Naive thymus-derived CD4-positive, alpha-beta T cell (primary cell): ENCODE measurements at regions of chr5 and their contacts with region 1.

Region 1: GRCh38 chr5:172714491-172715421 is 56.2 kb downstream of the DUSP1 start:
- DNase-seq: peak; percentile 38 to 65 (median 57)
- ATAC-seq: peak; percentile 85
- H3K4me3 ChIP-seq: no peak overlapping the region
- H3K4me3 Mint-ChIP-seq: no peak overlapping the region
- H3K27ac ChIP-seq: no peak overlapping the region
- H3K27ac Mint-ChIP-seq: peak overlapping the region in 4 of 9 donors; percentile 17 to 72 (median 38)
- H3K4me1 ChIP-seq: peaks cover 0 to 7% of the 10 kb centered on the region in 2 donors
- H3K4me1 Mint-ChIP-seq: peaks cover 0 to 8% (median 5%) of the 10 kb centered on the region in 7 donors
- H3K27me3 ChIP-seq: no peaks in the 10 kb centered on the region
- H3K27me3 Mint-ChIP-seq: peaks cover 0 to 18% (median 11%) of the 10 kb centered on the region in 5 donors

Region 2: GRCh38 chr5:172764849-172765765 is 50.4 kb after region 1 on chr5:
- CTCF ChIA-PET with region 1: interaction called, 33 read pairs
- POLR2A ChIA-PET with region 1: interaction called, 27 read pairs
- intact Hi-C with region 1: loop called (anchors 1 kb)
- DNase-seq: peak; percentile 86 to 100 (median 99)
- ATAC-seq: peak; percentile 73
- H3K4me3 ChIP-seq: peak overlapping the region; percentile 64
- H3K4me3 Mint-ChIP-seq: peak overlapping the region; percentile 80 to 93 (median 84)
- H3K27ac ChIP-seq: peak overlapping the region; percentile 93
- H3K27ac Mint-ChIP-seq: peak overlapping the region; percentile 94 to 100 (median 97)
- H3K4me1 ChIP-seq: peaks cover 25 to 31% of the 10 kb centered on the region in 2 donors
- H3K4me1 Mint-ChIP-seq: peaks cover 8 to 62% (median 52%) of the 10 kb centered on the region in 7 donors
- H3K27me3 ChIP-seq: no peaks in the 10 kb centered on the region
- H3K27me3 Mint-ChIP-seq: peaks cover 0 to 8% (median 0%) of the 10 kb centered on the region in 5 donors

Region 3: GRCh38 chr5:172833686-172834414 is 119.1 kb after region 1 on chr5 and contains the start of gene ERGIC1:
- CTCF ChIA-PET with region 1: interaction called, 6 read pairs
- POLR2A ChIA-PET with region 1: no interaction called
- intact Hi-C with region 1: loop called (anchors 2 kb)
- DNase-seq: peak; percentile 49 to 84 (median 58)
- ATAC-seq: peak; percentile 87
- H3K4me3 ChIP-seq: peak within 1 kb of the TSS; percentile 68
- H3K4me3 Mint-ChIP-seq: peak within 1 kb of the TSS; percentile 85 to 93 (median 90)
- H3K27ac ChIP-seq: peak within 1 kb of the TSS; percentile 87
- H3K27ac Mint-ChIP-seq: peak within 1 kb of the TSS; percentile 87 to 97 (median 94)
- H3K4me1 ChIP-seq: peaks cover 23 to 38% of the 10 kb centered on the region in 2 donors
- H3K4me1 Mint-ChIP-seq: peaks cover 25 to 50% (median 40%) of the 10 kb centered on the region in 7 donors
- H3K27me3 ChIP-seq: no peaks in the 10 kb centered on the region
- H3K27me3 Mint-ChIP-seq: no peaks in the 10 kb centered on the region
- total RNA-seq, gene ERGIC1: 44.4 to 71.3 (median 53.5) TPM

Region 4: GRCh38 chr5:172910828-172911627 is 196.3 kb after region 1 on chr5:
- CTCF ChIA-PET with region 1: interaction called, 4 read pairs
- POLR2A ChIA-PET with region 1: no interaction called
- intact Hi-C with region 1: loop called in 1 of 2 experiments (anchors 1 kb)
- DNase-seq: no peak
- ATAC-seq: peak; percentile 77
- H3K4me3 ChIP-seq: no peak overlapping the region
- H3K4me3 Mint-ChIP-seq: no peak overlapping the region
- H3K27ac ChIP-seq: no peak overlapping the region
- H3K27ac Mint-ChIP-seq: no peak overlapping the region
- H3K4me1 ChIP-seq: no peaks in the 10 kb centered on the region
- H3K4me1 Mint-ChIP-seq: peaks cover 0 to 3% (median 0%) of the 10 kb centered on the region in 7 donors
- H3K27me3 ChIP-seq: no peaks in the 10 kb centered on the region
- H3K27me3 Mint-ChIP-seq: no peaks in the 10 kb centered on the region

Region 5: DNA sequence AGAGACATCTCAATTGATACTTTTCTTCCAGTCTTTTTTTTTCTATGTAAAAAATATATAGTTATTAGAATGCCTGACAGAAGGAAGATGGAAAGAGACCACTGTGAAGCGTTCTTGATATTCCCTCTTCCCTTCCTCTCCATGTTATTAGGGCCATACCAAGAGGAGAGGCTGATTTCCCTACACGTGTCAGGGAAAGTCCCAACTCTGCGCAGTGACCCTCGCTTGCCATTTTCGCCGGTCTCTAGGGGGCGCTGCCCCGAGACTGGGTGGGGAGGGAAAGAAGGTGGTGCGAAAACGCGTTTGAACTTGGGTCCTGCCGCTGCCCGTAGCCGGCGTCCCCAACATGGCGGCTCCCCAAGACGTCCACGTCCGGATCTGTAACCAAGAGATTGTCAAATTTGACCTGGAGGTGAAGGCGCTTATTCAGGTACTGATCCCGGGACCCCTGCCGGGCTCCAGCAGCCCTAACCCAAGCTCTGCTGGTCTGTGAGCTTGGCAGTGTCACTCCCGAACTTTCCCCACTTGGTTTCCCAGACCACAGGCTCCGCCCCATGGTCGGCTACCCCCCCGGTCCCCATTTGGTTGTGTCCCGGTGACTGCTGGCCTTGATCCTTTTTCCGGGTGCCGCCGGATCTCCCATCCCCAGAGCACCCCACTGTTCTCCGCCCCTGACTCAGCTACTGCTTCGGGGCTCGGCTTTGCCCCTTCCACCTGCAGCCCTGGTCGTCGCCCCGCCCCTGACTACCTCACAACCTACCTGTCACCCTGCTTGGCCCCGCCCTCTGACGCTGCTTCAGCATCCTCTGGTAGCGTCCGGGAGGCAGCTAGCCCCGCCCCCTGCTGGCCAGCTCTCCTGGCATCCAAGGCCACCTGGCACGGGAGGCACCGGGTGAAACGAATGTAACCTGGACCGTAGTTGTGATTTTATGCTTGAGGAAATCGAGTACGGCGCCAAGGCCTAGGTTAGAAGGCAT is 429.7 kb after region 1 on chr5 and contains the start of gene BNIP1:
- CTCF ChIA-PET with region 1: no interaction called
- POLR2A ChIA-PET with region 1: no interaction called
- intact Hi-C with region 1: loop called in 1 of 2 experiments (anchors 2 kb)
- DNase-seq: peak; percentile 92 to 99 (median 96)
- ATAC-seq: peak; percentile 94
- H3K4me3 ChIP-seq: peak within 1 kb of the TSS; percentile 100
- H3K4me3 Mint-ChIP-seq: peak within 1 kb of the TSS; percentile 93 to 99 (median 97)
- H3K27ac ChIP-seq: peak within 1 kb of the TSS; percentile 98
- H3K27ac Mint-ChIP-seq: peak within 1 kb of the TSS; percentile 96 to 99 (median 98)
- H3K4me1 ChIP-seq: no peaks in the 10 kb centered on the region
- H3K4me1 Mint-ChIP-seq: peaks cover 5 to 21% (median 16%) of the 10 kb centered on the region in 7 donors
- H3K27me3 ChIP-seq: no peaks in the 10 kb centered on the region
- H3K27me3 Mint-ChIP-seq: no peaks in the 10 kb centered on the region
- total RNA-seq, gene BNIP1: 5.5 to 23.2 (median 15.3) TPM

Region 6: DNA sequence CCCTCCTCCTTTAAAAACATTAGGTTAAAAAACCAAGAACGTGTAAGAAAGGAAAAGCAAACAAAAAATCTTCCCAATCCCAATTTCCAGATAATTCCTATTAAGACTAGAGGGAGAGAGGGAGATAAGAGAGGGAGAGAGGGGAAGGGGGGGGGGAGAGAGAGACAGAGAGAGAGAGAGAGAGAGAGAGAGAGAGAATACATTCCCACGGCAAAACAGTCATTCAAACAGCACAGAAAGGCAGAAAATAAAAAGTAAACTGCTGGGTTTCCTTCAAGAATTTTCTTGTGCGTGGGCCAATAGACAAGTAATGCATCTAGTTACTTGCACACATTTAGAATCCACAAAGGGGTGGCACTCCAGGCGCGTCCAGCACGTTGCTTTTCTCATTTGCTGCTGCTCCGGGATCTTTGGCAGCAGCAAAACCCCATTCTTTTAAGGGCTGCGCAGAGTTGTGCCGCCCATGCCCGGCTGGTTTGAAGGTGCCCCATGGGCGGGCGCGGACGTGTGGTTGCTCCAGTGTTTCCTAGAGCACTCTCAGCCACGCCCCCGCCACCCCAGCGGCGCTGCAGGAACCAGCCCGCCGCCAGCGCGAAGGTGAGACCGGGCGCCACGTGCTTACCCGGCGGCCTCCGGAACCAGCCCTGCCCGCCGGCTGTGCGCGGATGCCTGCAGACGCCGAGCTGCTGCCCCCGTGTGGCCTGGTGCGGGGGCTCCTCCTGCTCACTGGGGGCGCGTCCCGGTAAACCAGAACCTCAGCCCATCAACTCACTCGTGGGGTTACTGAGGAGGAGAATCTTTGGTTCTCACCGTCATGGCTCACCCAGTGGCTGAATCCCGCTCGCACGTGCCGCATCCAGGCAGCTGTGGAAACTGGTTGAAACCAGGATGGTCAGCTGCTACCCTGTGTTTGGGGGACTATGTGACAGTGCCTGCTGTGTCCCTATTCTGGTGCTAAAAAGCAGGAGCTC is 568.8 kb after region 1 on chr5:
- CTCF ChIA-PET with region 1: no interaction called
- POLR2A ChIA-PET with region 1: no interaction called
- intact Hi-C with region 1: loop called in 1 of 2 experiments (anchors 5 kb)
- DNase-seq: peak; percentile 51 to 72 (median 69)
- ATAC-seq: peak; percentile 96
- H3K4me3 ChIP-seq: no peak overlapping the region
- H3K4me3 Mint-ChIP-seq: peak overlapping the region in 8 of 10 donors; percentile 10 to 81 (median 50)
- H3K27ac ChIP-seq: no peak overlapping the region
- H3K27ac Mint-ChIP-seq: no peak overlapping the region
- H3K4me1 ChIP-seq: no peaks in the 10 kb centered on the region
- H3K4me1 Mint-ChIP-seq: peaks cover 0 to 21% (median 7%) of the 10 kb centered on the region in 7 donors
- H3K27me3 ChIP-seq: no peaks in the 10 kb centered on the region
- H3K27me3 Mint-ChIP-seq: peaks cover 62 to 79% (median 71%) of the 10 kb centered on the region in 5 donors

Region 7: DNA sequence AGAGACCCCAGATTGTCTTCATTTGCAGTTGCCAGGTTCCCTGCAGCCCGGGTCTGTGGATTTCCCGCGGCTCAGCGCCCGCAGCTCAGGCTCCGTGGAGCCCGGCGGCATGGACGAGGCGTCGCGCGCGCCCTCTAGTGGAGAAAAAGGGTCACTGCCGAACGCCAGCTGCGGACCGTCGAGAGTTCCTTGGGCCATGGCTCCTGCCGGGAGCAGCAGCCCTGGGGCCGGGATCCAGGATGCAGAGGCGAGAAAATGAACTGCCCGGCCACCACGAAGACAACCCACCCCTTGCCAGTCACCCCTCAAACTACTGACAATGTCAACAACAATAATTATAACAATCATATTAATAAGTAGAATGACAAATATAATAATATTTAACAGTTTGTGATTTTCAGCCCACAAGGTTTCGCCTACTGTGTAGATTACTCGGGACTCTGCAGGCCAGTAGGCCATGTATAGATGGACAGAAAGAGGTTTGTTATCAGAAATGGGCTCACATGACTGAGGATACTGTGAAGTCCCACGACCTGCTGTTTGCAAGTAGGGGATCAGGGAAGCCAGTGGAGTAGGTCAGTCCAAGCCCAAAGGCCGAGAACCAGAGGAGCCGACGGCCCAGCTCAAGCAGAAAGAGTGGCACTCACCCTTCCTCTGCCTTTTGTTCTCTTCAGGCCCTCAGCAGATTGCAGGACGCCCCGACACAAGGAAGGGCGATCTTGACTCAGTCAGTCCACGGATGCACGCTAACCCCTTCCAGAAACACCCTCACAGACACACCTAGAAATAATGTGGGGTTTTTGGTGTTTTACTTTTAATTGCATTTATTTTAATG is 858.6 kb after region 1 on chr5:
- CTCF ChIA-PET with region 1: no interaction called
- POLR2A ChIA-PET with region 1: no interaction called
- intact Hi-C with region 1: loop called in 1 of 2 experiments (anchors 10 kb)
- DNase-seq: peak in 8 of 9 donors; percentile 33 to 71 (median 56)
- ATAC-seq: peak; percentile 83
- H3K4me3 ChIP-seq: no peak overlapping the region
- H3K4me3 Mint-ChIP-seq: peak overlapping the region in 7 of 10 donors; percentile 1 to 62 (median 32)
- H3K27ac ChIP-seq: no peak overlapping the region
- H3K27ac Mint-ChIP-seq: no peak overlapping the region
- H3K4me1 ChIP-seq: no peaks in the 10 kb centered on the region
- H3K4me1 Mint-ChIP-seq: peaks cover 5 to 10% (median 6%) of the 10 kb centered on the region in 7 donors
- H3K27me3 ChIP-seq: peaks cover 0 to 6% of the 10 kb centered on the region in 2 donors
- H3K27me3 Mint-ChIP-seq: peaks cover 16 to 28% (median 23%) of the 10 kb centered on the region in 5 donors